Heart right ventricle (tissue), 16 donors: ENCODE measurements at regions of chr1 and their contacts with region 1.

Region 1: DNA sequence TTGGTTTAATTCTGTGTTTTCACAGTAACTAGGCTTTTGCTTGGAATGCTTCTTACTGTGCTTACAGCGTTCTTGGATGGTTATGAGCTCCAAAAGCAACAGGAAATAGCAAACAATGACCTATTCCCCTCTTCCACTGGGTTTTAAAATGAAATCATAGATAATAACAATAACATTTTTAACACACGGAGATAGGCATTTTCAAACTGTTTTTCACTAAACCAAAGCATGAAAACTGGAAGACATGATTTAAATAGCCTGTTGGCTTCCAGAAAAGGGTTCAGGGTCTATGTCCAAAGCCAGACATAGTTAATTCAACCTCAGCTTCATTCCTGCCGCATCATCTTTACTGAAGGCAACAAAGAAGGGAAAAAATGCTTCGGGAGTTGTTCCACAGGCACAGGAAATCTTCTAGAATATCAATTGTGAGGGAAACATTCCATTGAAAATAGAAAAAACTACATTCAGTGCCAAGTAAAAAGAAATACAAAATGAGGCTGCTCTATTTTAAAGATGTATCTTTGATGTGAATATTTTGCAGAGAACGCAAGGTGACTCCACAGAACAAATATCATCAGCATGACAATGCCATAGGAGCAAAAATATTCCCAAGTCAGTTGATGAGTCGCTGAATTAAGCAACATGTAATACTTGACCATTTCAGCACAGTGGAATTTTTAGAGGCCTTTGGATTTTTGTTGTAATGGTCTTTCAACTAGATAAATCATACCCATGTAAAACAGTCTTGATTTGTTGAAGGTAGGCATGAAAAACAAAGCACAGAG is 80.7 kb downstream of the NID1 start:
- DNase-seq: no peak
- ATAC-seq: peak in 7 of 8 donors; percentile 38 to 84 (median 73)
- H3K4me3 ChIP-seq: peak overlapping the region in 1 of 10 donors; percentile 12
- H3K27ac ChIP-seq: peak overlapping the region; percentile 12 to 87 (median 76)
- H3K4me1 ChIP-seq: peaks cover 0 to 71% (median 57%) of the 10 kb centered on the region in 9 donors
- H3K27me3 ChIP-seq: no peaks in the 10 kb centered on the region
- CTCF ChIP-seq: no peak

Region 2: DNA sequence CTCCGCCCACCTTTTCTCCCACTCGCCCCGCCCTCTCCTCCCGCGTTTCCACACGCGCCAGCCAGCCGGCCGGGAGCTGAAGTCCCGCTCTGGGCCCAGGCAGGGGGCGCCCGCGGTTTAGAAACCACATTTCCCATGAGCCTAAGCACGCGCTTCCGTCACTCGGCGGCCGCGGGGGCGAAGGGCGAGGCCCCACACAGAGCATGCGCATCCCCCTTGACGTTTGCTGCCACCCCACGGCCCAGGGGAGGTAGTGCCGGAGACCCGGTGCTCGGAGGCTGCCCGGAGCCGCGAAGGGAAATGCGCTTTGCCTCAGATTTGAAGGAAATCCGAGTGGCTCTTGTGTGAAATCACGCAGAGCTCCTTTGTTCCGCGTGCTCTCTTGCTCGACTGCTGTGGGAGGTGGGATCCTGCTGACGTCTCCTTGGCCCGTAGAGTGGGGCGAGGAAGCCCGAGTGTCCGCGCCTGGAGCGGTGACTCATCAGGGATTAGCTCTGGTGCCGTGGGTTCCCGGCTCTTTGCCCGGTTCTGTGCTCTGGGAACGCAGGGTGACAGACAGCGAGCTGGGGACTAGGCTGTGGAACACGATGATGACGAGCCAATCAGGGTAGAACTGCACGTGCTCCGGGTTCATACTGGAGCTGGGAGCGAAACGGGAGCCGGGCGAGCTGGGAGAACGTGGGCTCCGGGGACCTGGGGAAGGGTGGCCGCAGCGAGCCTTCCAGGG is 479.6 kb before region 1 on chr1:
- intact Hi-C with region 1: loop called in 2 of 10 experiments (anchors 5 to 10 kb)
- DNase-seq: peak; percentile 99 to 100
- ATAC-seq: peak; percentile 93 to 97 (median 96)
- H3K4me3 ChIP-seq: peak overlapping the region; percentile 54 to 95 (median 68)
- H3K27ac ChIP-seq: peak overlapping the region; percentile 91 to 99 (median 96)
- H3K4me1 ChIP-seq: peaks cover 0 to 36% (median 26%) of the 10 kb centered on the region in 9 donors
- H3K27me3 ChIP-seq: no peaks in the 10 kb centered on the region
- CTCF ChIP-seq: peak; percentile 75 to 98 (median 95)

Region 3: GRCh38 chr1:236018885-236019453 is 34.7 kb after region 1 on chr1:
- intact Hi-C with region 1: loop called in 1 of 10 experiments (anchors 5 kb)
- DNase-seq: peak; percentile 77 to 86
- ATAC-seq: peak; percentile 82 to 90 (median 86)
- H3K4me3 ChIP-seq: no peak overlapping the region
- H3K27ac ChIP-seq: peak overlapping the region; percentile 63 to 87 (median 80)
- H3K4me1 ChIP-seq: peaks cover 4 to 69% (median 38%) of the 10 kb centered on the region in 9 donors
- H3K27me3 ChIP-seq: no peaks in the 10 kb centered on the region
- CTCF ChIP-seq: no peak

Region 4: DNA sequence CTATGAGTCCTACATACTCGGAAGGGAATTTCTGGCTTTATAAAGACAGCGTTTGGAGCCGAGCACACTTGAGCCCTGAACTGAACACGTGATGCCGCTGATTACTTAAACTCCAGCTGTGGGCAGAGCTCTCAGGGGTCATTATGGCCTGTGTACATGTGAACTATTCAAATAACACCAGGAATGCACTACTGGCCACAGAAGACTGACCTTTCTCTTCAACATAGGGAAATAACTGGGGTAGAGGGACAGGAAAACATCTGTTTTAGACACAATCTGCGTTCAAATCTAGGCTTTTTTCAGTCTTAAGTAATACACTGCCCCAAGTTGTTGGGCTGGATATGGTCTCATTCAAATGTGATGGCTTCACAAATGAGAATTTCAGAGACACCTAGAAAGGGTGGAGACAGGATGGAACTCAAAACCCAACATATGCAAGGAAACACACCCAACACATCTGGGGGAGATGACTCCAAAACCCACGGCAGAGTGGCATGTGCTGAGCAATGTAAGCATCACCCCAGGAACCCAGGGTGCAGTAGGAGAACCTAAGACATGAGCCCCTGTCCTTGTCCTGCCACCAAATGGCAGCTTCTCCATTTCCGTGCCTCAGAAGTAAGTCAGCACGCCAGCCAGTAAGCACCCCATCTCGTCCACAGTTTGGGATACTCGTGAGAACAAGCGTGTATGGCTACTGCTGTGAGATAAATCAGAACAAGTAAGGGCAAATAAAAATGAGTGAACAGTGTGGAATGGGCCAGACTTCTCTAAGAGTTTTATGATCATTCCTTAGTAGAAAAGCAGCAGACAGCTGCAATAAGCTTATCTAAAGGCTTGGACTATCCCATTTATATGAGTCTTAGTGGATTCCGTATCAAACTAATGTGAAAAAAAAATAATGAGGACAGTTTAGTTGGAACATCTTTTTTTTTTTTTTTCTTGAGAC is 55.8 kb after region 1 on chr1:
- intact Hi-C with region 1: no loop called
- DNase-seq: peak in 1 of 2 donors; percentile 36
- ATAC-seq: peak; percentile 66 to 89 (median 82)
- H3K4me3 ChIP-seq: no peak overlapping the region
- H3K27ac ChIP-seq: peak overlapping the region in 8 of 10 donors; percentile 29 to 68 (median 54)
- H3K4me1 ChIP-seq: peaks cover 5 to 34% (median 11%) of the 10 kb centered on the region in 9 donors
- H3K27me3 ChIP-seq: no peaks in the 10 kb centered on the region
- CTCF ChIP-seq: no peak

Region 5: DNA sequence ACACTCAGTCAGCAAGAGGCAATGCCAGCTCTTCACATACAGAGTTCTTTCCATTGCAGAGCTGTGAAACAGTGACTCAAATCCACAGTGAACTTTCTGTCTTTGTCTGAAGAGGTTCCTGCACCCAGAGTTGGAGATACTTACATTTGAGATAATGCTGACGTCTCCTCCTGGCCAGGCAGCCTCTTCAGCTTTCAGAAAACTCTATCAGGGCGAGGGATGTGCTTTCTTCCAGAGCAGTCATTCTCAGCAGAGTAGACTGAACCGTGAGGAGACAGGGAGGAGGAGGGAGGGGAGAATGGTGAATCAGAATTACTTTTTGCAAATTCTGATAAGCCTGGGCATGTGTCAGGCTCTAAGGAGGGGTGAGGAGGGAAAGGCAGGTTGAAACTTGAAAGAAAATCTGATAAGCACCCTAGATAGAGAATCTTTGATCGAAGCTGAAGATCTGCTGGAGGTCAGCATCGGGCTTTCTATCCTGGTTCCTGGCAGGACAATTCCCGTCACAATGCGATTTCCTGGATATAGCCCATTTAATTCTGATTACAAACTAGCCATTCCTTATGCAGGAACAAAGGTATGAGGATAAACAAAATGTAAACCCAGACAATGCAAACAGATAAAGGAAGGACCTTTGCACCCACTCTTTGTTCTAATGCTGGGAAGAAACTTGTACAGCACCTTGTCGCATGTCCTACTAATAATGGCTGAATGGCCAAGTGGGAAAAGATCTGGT is 99.6 kb after region 1 on chr1:
- intact Hi-C with region 1: no loop called
- DNase-seq: no peak
- ATAC-seq: peak in 3 of 8 donors; percentile 28 to 56 (median 30)
- H3K4me3 ChIP-seq: no peak overlapping the region
- H3K27ac ChIP-seq: no peak overlapping the region
- H3K4me1 ChIP-seq: peaks cover 0 to 9% (median 0%) of the 10 kb centered on the region in 9 donors
- H3K27me3 ChIP-seq: no peaks in the 10 kb centered on the region
- CTCF ChIP-seq: no peak